IMR-90 (cell line): ENCODE measurements at regions of chr6 and their contacts with region 1.

Region 1: DNA sequence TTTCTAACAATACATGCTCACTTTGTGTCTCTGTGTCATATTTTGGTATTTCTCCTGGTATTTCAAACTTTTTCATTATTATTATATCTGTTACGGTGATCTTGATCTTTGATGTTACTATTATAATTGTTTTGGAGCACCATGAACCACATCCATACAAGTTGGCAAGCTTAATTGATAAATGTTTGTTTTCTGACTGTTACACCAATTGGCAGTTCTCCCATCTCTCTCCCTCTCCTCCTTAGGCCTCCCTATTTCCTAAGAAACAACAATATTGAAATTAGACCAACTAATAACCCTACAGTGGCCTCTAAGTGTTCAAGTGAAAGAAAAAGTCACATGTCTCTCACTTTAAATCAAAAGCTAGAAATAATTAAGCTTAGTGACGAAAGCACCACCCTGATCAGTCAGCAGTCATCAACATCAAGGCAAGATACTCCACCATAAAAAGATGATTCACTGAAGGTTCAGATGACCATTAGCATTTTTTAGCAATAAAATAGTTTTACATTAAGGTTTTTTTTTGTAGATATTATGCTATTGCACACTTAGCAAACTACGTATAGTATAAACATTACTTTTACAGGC is 61.5 kb downstream of the IBTK start:
- DNase-seq: no peak
- ATAC-seq: no peak
- H3K4me3 ChIP-seq: no peak overlapping the region
- H3K27ac ChIP-seq: no peak overlapping the region
- H3K4me1 ChIP-seq: no peaks in the 10 kb centered on the region
- H3K27me3 ChIP-seq: no peaks in the 10 kb centered on the region
- CTCF ChIP-seq: no peak
- POLR2A ChIP-seq: no peak
- RAD21 ChIP-seq: no peak

Region 2: DNA sequence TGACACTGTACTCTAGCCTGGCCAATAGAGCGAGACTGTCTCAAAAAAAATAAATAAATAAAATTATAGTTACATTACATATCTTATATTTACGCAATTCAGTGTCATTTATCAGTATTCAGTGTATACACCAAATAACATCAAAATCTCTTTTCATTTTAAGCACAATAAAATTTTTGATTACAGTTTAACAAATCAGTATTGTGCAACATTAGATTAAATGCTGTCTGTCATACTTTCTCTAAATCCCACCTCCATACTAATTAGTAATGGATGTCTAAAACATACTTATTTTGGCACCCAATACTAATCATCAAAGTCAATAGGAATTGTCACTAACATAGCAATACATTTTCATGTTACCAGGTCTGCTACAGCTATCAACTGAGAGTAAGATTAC is 34.1 kb after region 1 on chr6:
- CTCF ChIA-PET with region 1: no interaction called
- POLR2A ChIA-PET with region 1: no interaction called
- dilution Hi-C with region 1: no loop called
- in situ Hi-C with region 1: no loop called
- intact Hi-C with region 1: loop called (anchors 5 kb)
- DNase-seq: no peak
- ATAC-seq: no peak
- H3K4me3 ChIP-seq: no peak overlapping the region
- H3K27ac ChIP-seq: no peak overlapping the region
- H3K4me1 ChIP-seq: no peaks in the 10 kb centered on the region
- H3K27me3 ChIP-seq: no peaks in the 10 kb centered on the region
- CTCF ChIP-seq: no peak
- POLR2A ChIP-seq: no peak
- RAD21 ChIP-seq: no peak

Region 3: GRCh38 chr6:82249381-82250253 is 63.6 kb after region 1 on chr6:
- CTCF ChIA-PET with region 1: no interaction called
- POLR2A ChIA-PET with region 1: no interaction called
- dilution Hi-C with region 1: no loop called
- in situ Hi-C with region 1: no loop called
- intact Hi-C with region 1: no loop called
- DNase-seq: no peak
- ATAC-seq: no peak
- H3K4me3 ChIP-seq: no peak overlapping the region
- H3K27ac ChIP-seq: no peak overlapping the region
- H3K4me1 ChIP-seq: peaks cover 10% of the 10 kb centered on the region
- H3K27me3 ChIP-seq: no peaks in the 10 kb centered on the region
- CTCF ChIP-seq: no peak
- POLR2A ChIP-seq: no peak
- RAD21 ChIP-seq: no peak